Activated B cell treated with CpG ODN at 0.5 μM for 24 hours (primary cell): ENCODE measurements at regions of chr12 and their contacts with region 1.

Region 1: GRCh38 chr12:9813821-9814809 is 13.2 kb upstream of the KLRF1 start:
- DNase-seq: peak; percentile 80
- ATAC-seq: peak; percentile 97
- H3K4me3 Mint-ChIP-seq: peak overlapping the region; percentile 73
- H3K27ac Mint-ChIP-seq: no peak overlapping the region
- H3K4me1 Mint-ChIP-seq: peaks cover 20% of the 10 kb centered on the region
- H3K27me3 Mint-ChIP-seq: peaks cover 18% of the 10 kb centered on the region
- CTCF ChIP-seq: peak; percentile 47

Region 2: DNA sequence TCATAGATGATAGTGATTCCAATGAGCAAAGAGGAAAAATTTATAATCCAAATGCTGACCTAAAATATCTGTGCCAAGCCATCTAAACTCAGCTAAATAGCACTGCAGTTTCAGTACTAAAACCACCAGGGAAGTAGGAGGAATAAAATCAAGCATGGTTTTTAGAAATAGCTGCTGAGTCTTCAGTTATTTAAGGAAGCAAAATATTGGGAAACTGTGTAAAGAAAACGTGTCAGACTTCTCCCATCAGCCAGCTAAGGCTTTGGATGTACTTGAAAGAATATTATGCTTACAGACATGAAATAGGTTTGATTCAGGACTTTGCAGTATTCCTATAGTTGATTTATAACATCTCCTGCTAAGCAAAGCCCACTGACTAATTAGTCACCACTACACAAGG is 119.9 kb before region 1 on chr12:
- CTCF ChIA-PET with region 1: no interaction called
- POLR2A ChIA-PET with region 1: no interaction called
- intact Hi-C with region 1: no loop called
- DNase-seq: no peak
- ATAC-seq: no peak
- H3K4me3 Mint-ChIP-seq: no peak overlapping the region
- H3K27ac Mint-ChIP-seq: peak overlapping the region; percentile 41
- H3K4me1 Mint-ChIP-seq: peaks cover 52% of the 10 kb centered on the region
- H3K27me3 Mint-ChIP-seq: no peaks in the 10 kb centered on the region
- CTCF ChIP-seq: no peak

Region 3: DNA sequence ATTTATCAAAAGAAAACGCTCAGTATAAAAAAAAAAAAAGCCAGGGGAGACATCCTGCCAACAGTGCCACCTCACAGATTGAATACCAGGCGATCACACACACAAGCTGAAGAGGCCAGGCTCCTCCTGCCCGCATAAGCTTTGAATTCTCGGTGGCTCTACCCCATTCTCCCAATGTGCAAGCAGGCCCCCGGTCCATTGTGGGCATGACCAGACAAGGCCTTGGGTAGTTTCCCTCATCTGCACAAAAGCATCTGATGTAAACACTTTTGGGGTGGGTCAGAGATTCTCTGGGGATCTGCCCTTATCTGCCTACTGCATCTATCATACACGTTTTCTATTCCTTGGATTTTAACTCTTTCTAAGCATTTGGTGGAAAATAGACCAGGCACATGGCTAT is 83.4 kb after region 1 on chr12:
- CTCF ChIA-PET with region 1: no interaction called
- POLR2A ChIA-PET with region 1: no interaction called
- intact Hi-C with region 1: no loop called
- DNase-seq: no peak
- ATAC-seq: no peak
- H3K4me3 Mint-ChIP-seq: no peak overlapping the region
- H3K27ac Mint-ChIP-seq: no peak overlapping the region
- H3K4me1 Mint-ChIP-seq: no peaks in the 10 kb centered on the region
- H3K27me3 Mint-ChIP-seq: peaks cover 23% of the 10 kb centered on the region
- CTCF ChIP-seq: no peak

Region 4: DNA sequence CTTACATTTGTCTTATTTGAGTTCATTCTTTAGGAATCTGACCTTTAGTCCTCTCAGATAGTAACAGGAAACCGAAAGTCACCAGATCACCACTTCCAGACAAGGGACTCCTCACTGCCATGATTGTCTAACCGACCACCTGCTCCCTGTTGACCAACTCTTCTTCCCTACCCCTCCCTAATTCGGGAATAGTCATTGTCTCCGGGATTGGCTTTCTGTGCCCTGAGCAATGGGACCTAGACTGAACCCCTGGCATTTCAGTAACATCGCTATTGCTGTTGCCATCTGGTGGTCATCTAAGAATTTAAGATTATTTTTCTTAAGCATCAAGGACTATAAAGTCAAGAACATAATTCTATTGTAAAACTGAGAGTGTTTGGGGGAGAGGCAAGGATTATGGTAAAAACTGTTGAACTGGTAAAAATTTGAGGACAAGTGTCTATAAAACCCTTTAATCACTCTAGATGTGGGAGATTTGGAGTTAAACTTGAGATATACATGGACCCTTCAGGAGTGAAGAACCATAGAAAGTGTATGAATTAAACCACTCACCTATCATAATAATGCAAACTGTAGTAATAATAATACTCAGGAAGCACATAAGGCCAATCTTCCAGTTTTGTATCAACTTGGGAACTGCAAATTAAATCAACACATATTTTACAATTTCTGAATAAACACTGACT is 111.7 kb after region 1 on chr12:
- CTCF ChIA-PET with region 1: interaction called, 37 read pairs
- POLR2A ChIA-PET with region 1: no interaction called
- intact Hi-C with region 1: loop called (anchors 1 kb)
- DNase-seq: no peak
- ATAC-seq: peak; percentile 40
- H3K4me3 Mint-ChIP-seq: peak overlapping the region; percentile 62
- H3K27ac Mint-ChIP-seq: no peak overlapping the region
- H3K4me1 Mint-ChIP-seq: peaks cover 4% of the 10 kb centered on the region
- H3K27me3 Mint-ChIP-seq: peaks cover 12% of the 10 kb centered on the region
- CTCF ChIP-seq: no peak

Region 5: GRCh38 chr12:9948606-9949296 is 134.6 kb after region 1 on chr12:
- CTCF ChIA-PET with region 1: no interaction called
- POLR2A ChIA-PET with region 1: no interaction called
- intact Hi-C with region 1: no loop called
- DNase-seq: no peak
- ATAC-seq: peak; percentile 90
- H3K4me3 Mint-ChIP-seq: peak overlapping the region; percentile 22
- H3K27ac Mint-ChIP-seq: peak overlapping the region; percentile 80
- H3K4me1 Mint-ChIP-seq: peaks cover 48% of the 10 kb centered on the region
- H3K27me3 Mint-ChIP-seq: no peaks in the 10 kb centered on the region
- CTCF ChIP-seq: no peak

Region 6: GRCh38 chr12:10001171-10001776 is 187.2 kb after region 1 on chr12:
- CTCF ChIA-PET with region 1: no interaction called
- POLR2A ChIA-PET with region 1: no interaction called
- intact Hi-C with region 1: loop called (anchors 5 kb)
- DNase-seq: no peak
- ATAC-seq: no peak
- H3K4me3 Mint-ChIP-seq: no peak overlapping the region
- H3K27ac Mint-ChIP-seq: no peak overlapping the region
- H3K4me1 Mint-ChIP-seq: no peaks in the 10 kb centered on the region
- H3K27me3 Mint-ChIP-seq: peaks cover 24% of the 10 kb centered on the region
- CTCF ChIP-seq: no peak

Region 7: GRCh38 chr12:10190558-10191388 is 376.7 kb after region 1 on chr12:
- CTCF ChIA-PET with region 1: no interaction called
- POLR2A ChIA-PET with region 1: no interaction called
- intact Hi-C with region 1: loop called (anchors 2 kb)
- DNase-seq: no peak
- ATAC-seq: peak; percentile 94
- H3K4me3 Mint-ChIP-seq: no peak overlapping the region
- H3K27ac Mint-ChIP-seq: no peak overlapping the region
- H3K4me1 Mint-ChIP-seq: peaks cover 8% of the 10 kb centered on the region
- H3K27me3 Mint-ChIP-seq: peaks cover 51% of the 10 kb centered on the region
- CTCF ChIP-seq: peak; percentile 22

Region 8: DNA sequence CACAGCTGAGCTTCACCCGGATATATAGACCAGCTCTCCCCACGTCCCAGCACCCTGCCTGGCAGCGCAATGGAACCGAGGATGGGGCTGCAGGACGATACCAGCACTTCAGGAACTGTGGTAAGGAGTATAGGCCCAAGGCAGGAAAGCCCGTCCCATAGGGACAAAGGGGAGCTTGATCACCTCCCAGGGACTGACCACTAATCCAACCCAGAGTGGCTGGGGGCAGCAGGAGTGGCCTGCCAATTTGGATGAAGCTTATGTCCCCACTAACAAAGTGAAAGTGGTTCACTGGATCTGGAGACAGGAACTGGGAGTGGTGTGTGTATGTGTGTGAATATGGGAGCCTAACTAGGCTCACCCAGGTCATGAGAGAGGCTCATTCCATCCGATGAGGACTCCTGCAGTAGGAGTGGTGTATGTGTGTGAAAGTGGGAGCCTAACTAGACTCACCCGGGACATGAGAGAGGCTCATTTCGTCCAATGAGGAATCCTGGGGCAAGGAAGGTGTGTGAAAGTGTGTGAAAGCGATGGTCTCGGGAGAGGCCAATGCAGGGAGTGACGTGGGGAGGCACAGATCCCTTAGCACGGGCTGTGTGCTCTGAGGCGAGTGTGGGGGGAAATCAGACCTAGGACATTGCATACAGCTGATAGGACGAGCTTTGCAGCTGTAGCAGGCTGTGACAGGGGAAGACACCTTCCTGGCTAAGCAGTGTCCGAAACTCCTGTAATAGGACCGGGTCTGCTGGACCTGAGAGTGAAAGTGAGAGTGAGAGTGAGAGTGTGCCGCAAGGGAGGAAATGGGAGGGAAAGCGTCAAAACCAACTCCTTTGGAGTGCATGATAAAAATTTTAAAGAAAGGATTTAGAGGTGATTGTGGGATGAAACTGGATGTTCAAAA is 550.0 kb after region 1 on chr12:
- CTCF ChIA-PET with region 1: no interaction called
- POLR2A ChIA-PET with region 1: no interaction called
- intact Hi-C with region 1: no loop called
- DNase-seq: peak; percentile 43
- ATAC-seq: peak; percentile 71
- H3K4me3 Mint-ChIP-seq: no peak overlapping the region
- H3K27ac Mint-ChIP-seq: no peak overlapping the region
- H3K4me1 Mint-ChIP-seq: peaks cover 7% of the 10 kb centered on the region
- H3K27me3 Mint-ChIP-seq: peaks cover 2% of the 10 kb centered on the region
- CTCF ChIP-seq: no peak